ENCODE measurements at regions of chr17 and their contacts with region 1.

Region 1: DNA sequence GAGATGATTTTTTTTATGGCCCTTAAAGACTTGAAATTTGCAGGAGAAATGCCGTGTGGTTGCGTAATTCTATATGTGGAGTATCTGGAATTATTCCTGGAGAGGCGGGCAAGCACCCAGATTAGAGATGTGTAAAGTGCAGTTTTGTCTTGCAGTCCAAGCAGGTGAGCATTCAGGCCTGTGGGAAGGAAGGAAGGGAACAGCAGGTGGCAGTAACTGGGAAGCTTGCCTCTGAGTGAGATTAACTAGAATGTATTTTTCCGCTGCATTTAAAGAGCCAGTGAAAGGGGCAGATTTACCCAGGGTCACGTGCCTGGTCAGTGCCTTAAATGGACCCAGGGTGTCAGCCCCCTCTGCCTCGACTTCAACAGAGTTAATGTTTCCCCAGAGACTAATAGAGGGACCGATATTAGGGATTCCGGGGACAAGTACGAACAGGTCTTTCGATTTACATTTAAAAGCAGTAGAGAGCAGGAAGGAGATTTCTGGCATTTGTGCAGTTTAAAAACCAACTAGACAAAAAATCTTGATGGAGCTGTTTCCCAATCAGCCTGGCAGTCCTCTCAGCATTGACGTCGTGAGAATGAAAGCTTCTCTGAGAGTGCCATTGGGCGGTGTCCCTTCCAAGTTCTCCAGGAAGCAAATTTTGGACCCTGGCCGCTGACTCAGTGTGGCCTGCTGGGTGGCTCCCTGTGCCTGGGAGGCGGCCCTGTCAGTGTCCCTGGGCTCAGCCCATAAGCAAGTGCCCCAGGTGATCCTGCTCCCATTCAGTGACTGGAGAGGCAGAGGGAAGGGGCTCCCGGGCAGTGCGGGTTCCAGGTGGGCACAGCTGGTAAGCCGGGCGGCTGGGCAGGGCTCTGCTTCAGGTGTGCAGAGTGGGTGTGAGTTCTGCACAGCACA is 38.2 kb downstream of the KSR1 start:
- DNase-seq: peak; percentile 46
- H3K4me3 ChIP-seq: no peak overlapping the region
- H3K27ac ChIP-seq: peak overlapping the region; percentile 60
- H3K4me1 ChIP-seq: peaks cover 55% of the 10 kb centered on the region
- H3K27me3 ChIP-seq: no peaks in the 10 kb centered on the region
- CTCF ChIP-seq: peak; percentile 40

Region 2: GRCh38 chr17:27446569-27447301 is 47.7 kb before region 1 on chr17:
- CTCF ChIA-PET with region 1: no interaction called
- POLR2A ChIA-PET with region 1: no interaction called
- intact Hi-C with region 1: loop called (anchors 5 kb)
- DNase-seq: no peak
- H3K4me3 ChIP-seq: no peak overlapping the region
- H3K27ac ChIP-seq: no peak overlapping the region
- H3K4me1 ChIP-seq: no peaks in the 10 kb centered on the region
- H3K27me3 ChIP-seq: no peaks in the 10 kb centered on the region
- CTCF ChIP-seq: no peak

Measured in A673 (cell line).